Activated CD4-positive, alpha-beta memory T cell treated with anti-CD3 and anti-CD28 coated beads for 36 hours (primary cell): ENCODE measurements at regions of chrX and their contacts with region 1.

Region 1: DNA sequence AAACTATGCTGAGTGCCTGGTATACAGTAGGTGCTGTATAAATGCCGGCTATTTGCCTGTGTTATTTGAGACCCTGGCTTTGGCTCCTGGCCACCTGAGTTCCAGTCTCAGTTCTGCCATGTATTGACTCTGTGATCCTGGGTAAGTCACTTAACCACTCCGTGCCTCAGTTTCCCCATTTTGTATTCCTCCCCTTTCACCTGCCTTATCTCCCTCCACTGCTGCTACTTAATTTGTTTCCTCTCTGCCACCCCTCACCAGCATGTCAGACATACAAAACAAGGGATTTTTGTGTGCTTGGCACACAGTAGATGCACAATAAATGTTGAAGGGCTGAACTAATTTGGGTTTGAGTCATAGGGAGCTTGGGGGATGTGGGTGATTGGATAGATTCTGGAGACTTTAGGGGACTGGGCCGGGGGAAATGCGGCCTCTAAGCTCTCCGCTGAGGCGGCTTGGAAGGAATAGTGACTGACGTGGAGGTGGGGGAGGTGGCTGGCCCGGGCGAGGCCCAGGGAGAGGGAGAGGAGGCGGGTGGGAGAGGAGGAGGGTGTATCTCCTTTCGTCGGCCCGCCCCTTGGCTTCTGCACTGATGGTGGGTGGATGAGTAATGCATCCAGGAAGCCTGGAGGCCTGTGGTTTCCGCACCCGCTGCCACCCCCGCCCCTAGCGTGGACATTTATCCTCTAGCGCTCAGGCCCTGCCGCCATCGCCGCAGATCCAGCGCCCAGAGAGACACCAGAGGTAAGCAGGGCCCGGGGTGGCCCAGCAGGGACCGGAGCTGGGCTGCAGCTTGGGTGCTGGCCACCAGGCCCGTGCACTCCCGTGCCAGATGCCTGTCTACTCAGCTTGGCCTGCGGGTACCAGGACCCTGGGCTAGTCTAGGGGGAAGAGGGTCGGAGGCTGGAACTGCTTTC is at the start of gene TIMP1:
- DNase-seq: peak; percentile 92
- H3K4me3 Mint-ChIP-seq: peak within 1 kb of the TSS; percentile 65
- H3K27ac Mint-ChIP-seq: peak within 1 kb of the TSS; percentile 74
- H3K4me1 Mint-ChIP-seq: peaks cover 41% of the 10 kb centered on the region
- H3K27me3 Mint-ChIP-seq: no peaks in the 10 kb centered on the region
- total RNA-seq, gene TIMP1: 85.6 to 92.8 TPM

Region 2: GRCh38 chrX:47619486-47620302 is 37.7 kb after region 1 on chrX and contains the start of gene SYN1:
- CTCF ChIA-PET with region 1: no interaction called
- POLR2A ChIA-PET with region 1: no interaction called
- intact Hi-C with region 1: loop called (anchors 5 kb)
- DNase-seq: peak; percentile 85
- H3K4me3 Mint-ChIP-seq: peak within 1 kb of the TSS; percentile 57
- H3K27ac Mint-ChIP-seq: no peak within 1 kb of the TSS
- H3K4me1 Mint-ChIP-seq: peaks cover 9% of the 10 kb centered on the region
- H3K27me3 Mint-ChIP-seq: peaks cover 5% of the 10 kb centered on the region
- total RNA-seq, gene SYN1: 0.83 to 1.3 TPM

Region 3: DNA sequence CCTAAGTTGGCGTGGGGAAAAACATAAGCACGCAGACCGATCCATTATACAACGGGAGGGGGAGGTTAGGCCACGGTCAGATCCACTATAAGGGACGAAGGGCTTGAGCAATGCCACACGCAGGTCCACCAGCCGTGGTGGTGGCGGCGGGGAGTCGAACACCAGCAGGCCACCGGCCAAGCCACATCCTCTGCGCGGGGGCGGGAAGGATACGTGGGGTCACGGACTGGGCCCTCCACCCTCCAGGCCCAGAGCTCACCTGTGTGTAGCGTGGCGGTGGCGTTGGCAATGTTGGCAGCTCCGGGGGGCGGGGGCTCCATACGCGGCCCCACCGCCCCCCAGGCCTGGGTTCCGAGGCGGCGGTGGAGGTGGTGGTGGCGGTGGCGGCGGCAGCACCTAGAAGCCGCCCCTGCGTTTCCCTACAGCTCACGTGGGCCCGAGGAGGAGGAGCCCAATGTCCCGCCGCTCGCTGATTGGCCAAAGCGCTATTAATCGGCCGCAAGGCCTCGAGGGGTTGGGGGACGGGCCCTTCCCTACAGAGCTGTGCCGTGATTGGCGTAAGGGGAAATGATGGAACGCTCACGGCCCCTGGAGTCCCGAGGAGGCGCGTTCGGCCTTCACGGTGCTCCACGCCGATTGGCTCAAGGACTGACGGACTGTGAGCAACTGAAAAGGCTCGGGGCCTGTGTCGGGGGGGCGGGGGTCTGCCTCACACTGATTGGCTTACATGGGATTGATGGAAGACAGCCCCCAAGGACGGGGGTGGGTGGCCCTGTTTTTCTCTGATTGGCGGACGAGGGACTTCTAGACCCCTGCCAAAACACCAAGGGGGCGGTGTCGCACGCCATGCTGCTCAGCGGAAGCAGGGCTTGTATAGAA is 68.4 kb after region 1 on chrX and contains the start of gene ELK1:
- CTCF ChIA-PET with region 1: no interaction called
- POLR2A ChIA-PET with region 1: no interaction called
- intact Hi-C with region 1: loop called (anchors 5 kb)
- DNase-seq: peak; percentile 94
- H3K4me3 Mint-ChIP-seq: peak within 1 kb of the TSS; percentile 84
- H3K27ac Mint-ChIP-seq: peak within 1 kb of the TSS; percentile 93
- H3K4me1 Mint-ChIP-seq: peaks cover 41% of the 10 kb centered on the region
- H3K27me3 Mint-ChIP-seq: no peaks in the 10 kb centered on the region
- total RNA-seq, gene ELK1: 93.6 to 95.3 TPM